AG04450 (cell line): ENCODE measurements at regions of chr7 and their contacts with region 1.

Region 1: GRCh38 chr7:147483634-147484292 is 1106.8 kb upstream of the C7orf33 start:
- DNase-seq: no peak
- H3K4me3 ChIP-seq: no peak overlapping the region
- H3K27ac ChIP-seq: no peak overlapping the region
- H3K27me3 ChIP-seq: no peaks in the 10 kb centered on the region
- CTCF ChIP-seq: no peak

Region 2: GRCh38 chr7:147207988-147208387 is 275.8 kb before region 1 on chr7:
- CTCF ChIA-PET with region 1: no interaction called
- POLR2A ChIA-PET with region 1: no interaction called
- DNase-seq: no peak
- H3K4me3 ChIP-seq: no peak overlapping the region
- H3K27ac ChIP-seq: no peak overlapping the region
- H3K27me3 ChIP-seq: no peaks in the 10 kb centered on the region
- CTCF ChIP-seq: no peak

Region 3: GRCh38 chr7:147235645-147236382 is 247.9 kb before region 1 on chr7:
- CTCF ChIA-PET with region 1: no interaction called
- POLR2A ChIA-PET with region 1: no interaction called
- DNase-seq: no peak
- H3K4me3 ChIP-seq: no peak overlapping the region
- H3K27ac ChIP-seq: no peak overlapping the region
- H3K27me3 ChIP-seq: no peaks in the 10 kb centered on the region
- CTCF ChIP-seq: no peak

Region 4: DNA sequence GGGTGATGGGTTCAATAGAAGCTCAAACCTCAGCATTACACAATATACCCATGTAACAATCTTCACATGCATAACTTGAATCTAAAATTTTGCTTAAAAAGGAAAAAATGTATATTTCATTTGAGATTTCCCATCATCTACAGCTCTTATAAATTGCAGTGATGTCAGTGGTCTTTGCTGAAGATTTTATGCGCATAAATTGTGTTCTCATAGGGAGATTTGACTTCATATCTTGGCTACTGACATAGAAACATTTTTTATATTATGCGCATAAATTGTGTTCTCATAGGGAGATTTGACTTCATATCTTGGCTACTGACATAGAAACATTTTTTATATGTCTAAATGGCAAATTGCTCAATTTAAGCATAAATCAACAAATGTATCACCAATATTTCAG is 18.5 kb before region 1 on chr7:
- CTCF ChIA-PET with region 1: interaction called, 11 read pairs
- POLR2A ChIA-PET with region 1: no interaction called
- DNase-seq: no peak
- H3K4me3 ChIP-seq: no peak overlapping the region
- H3K27ac ChIP-seq: no peak overlapping the region
- H3K27me3 ChIP-seq: no peaks in the 10 kb centered on the region
- CTCF ChIP-seq: no peak

Region 5: DNA sequence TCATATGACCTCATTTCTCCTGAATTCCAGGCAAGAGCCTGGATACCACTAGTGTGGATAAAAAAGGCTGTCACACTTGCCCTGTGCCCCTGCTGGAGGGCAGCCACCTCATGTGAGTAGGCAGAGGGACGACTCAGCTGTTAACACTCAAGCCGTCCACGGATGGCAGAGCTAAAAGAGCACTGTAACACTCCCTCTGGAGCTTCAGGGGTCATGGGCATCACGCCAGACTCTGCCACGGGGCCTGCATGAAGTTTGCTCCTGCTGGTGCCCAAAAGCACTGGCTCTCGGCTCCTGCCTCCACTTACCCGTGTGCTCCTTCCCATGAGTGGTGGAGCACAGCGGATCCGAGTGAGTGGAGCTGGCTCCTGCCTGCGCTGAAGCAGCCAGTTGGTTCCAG is 187.0 kb after region 1 on chr7:
- CTCF ChIA-PET with region 1: no interaction called
- POLR2A ChIA-PET with region 1: no interaction called
- DNase-seq: no peak
- H3K4me3 ChIP-seq: no peak overlapping the region
- H3K27ac ChIP-seq: no peak overlapping the region
- H3K27me3 ChIP-seq: no peaks in the 10 kb centered on the region
- CTCF ChIP-seq: no peak